ENCODE measurements at regions of chr18 and their contacts with region 1.

Region 1: DNA sequence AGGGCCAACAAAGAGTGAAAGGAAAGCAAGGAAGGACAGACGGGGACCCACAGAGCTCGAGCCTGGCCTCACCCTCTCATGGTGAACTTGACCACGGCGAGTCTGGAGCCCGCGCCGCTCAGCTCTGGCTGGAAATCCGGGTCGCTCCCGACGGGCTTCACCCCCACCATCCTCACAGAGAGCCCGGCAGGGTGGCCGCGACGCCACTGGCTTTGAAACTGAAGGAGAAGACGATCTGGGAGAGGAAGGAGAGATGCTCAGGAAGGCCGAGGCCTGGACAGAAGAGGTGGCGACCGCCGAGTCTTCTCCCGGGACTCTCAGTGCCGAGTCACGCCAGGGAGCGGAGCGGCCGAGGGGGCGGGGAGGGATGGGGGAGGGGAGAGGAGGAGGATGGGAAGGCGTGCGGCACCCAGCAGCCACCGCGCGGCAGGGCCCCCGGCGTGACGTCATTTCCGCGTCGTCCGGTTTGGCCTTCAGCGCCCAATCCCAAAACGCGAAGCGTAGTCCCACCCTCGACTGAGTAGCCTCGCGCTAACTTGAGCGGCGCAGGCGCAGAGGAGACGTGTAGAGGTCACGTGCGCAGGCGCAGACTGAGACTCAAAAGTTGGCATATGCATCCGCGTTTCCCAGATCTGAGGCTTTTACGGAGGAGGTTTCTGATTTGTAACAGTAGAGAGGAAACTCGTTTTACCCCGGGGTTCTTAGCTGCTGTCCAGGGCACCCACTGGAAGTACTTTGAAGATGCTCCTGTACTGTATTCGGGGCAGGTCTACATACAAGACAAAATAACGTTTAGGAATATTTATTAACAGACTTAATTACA is at the start of gene TXNL1:
- DNase-seq: peak; percentile 99
- H3K4me3 ChIP-seq: peak within 1 kb of the TSS; percentile 77 to 91 (median 86)
- H3K4me3 Mint-ChIP-seq: peak within 1 kb of the TSS; percentile 99
- H3K27ac ChIP-seq: peak within 1 kb of the TSS; percentile 93 to 95
- H3K27ac Mint-ChIP-seq: peak within 1 kb of the TSS; percentile 97 to 100 (median 100)
- H3K4me1 ChIP-seq: peaks cover 17 to 30% of the 10 kb centered on the region in 2 donors
- H3K4me1 Mint-ChIP-seq: peaks cover 38% of the 10 kb centered on the region
- H3K27me3 ChIP-seq: no peaks in the 10 kb centered on the region
- H3K27me3 Mint-ChIP-seq: no peaks in the 10 kb centered on the region
- CTCF ChIP-seq: no peak
- polyA plus RNA-seq, gene TXNL1: 22.3 to 80.4 (median 77.8) TPM

Region 2: GRCh38 chr18:56257205-56257604 is 381.3 kb before region 1 on chr18:
- intact Hi-C with region 1: loop called in 1 of 2 experiments (anchors 10 kb)
- DNase-seq: peak; percentile 65 to 85 (median 75)
- H3K4me3 ChIP-seq: peak overlapping the region in 1 of 3 experiments; percentile 41
- H3K4me3 Mint-ChIP-seq: peak overlapping the region in 1 of 2 donors; percentile 77
- H3K27ac ChIP-seq: peak overlapping the region; percentile 34 to 35
- H3K27ac Mint-ChIP-seq: peak overlapping the region; percentile 55 to 95 (median 85)
- H3K4me1 ChIP-seq: peaks cover 21 to 22% of the 10 kb centered on the region in 2 donors
- H3K4me1 Mint-ChIP-seq: peaks cover 21% of the 10 kb centered on the region
- H3K27me3 ChIP-seq: no peaks in the 10 kb centered on the region
- H3K27me3 Mint-ChIP-seq: peaks cover 0 to 2% (median 0%) of the 10 kb centered on the region in 3 donors
- CTCF ChIP-seq: no peak

Region 3: GRCh38 chr18:56650944-56651770 is 12.7 kb after region 1 on chr18 and contains the start of gene WDR7:
- intact Hi-C with region 1: loop called in 1 of 2 experiments (anchors 2 kb)
- DNase-seq: peak; percentile 93 to 96 (median 94)
- H3K4me3 ChIP-seq: peak within 1 kb of the TSS; percentile 64 to 92 (median 86)
- H3K4me3 Mint-ChIP-seq: peak within 1 kb of the TSS; percentile 94 to 95
- H3K27ac ChIP-seq: peak within 1 kb of the TSS; percentile 87 to 90
- H3K27ac Mint-ChIP-seq: peak within 1 kb of the TSS; percentile 93 to 97 (median 96)
- H3K4me1 ChIP-seq: peaks cover 48 to 57% of the 10 kb centered on the region in 2 donors
- H3K4me1 Mint-ChIP-seq: peaks cover 58% of the 10 kb centered on the region
- H3K27me3 ChIP-seq: no peaks in the 10 kb centered on the region
- H3K27me3 Mint-ChIP-seq: no peaks in the 10 kb centered on the region
- CTCF ChIP-seq: no peak
- polyA plus RNA-seq, gene WDR7: 9.1 to 23.6 (median 9.5) TPM

Region 4: GRCh38 chr18:57621246-57621604 is 982.7 kb after region 1 on chr18:
- intact Hi-C with region 1: loop called in 1 of 2 experiments (anchors 10 kb)
- DNase-seq: peak in 1 of 3 donors; percentile 16
- H3K4me3 ChIP-seq: peak overlapping the region; percentile 65 to 92 (median 70)
- H3K4me3 Mint-ChIP-seq: peak overlapping the region; percentile 98 to 99
- H3K27ac ChIP-seq: peak overlapping the region; percentile 89 to 96
- H3K27ac Mint-ChIP-seq: peak overlapping the region; percentile 97 to 100 (median 99)
- H3K4me1 ChIP-seq: peaks cover 30 to 32% of the 10 kb centered on the region in 2 donors
- H3K4me1 Mint-ChIP-seq: peaks cover 28% of the 10 kb centered on the region
- H3K27me3 ChIP-seq: no peaks in the 10 kb centered on the region
- H3K27me3 Mint-ChIP-seq: peaks cover 0 to 2% (median 0%) of the 10 kb centered on the region in 3 donors
- CTCF ChIP-seq: no peak